Activated B cell treated with CpG ODN at 0.5 μM for 24 hours (primary cell): ENCODE measurements at regions of chr1 and their contacts with region 1.

Region 1: GRCh38 chr1:19704247-19705113 is 39.8 kb downstream of the HTR6 start:
- DNase-seq: peak; percentile 34
- ATAC-seq: peak; percentile 61
- H3K4me3 Mint-ChIP-seq: no peak overlapping the region
- H3K27ac Mint-ChIP-seq: no peak overlapping the region
- H3K4me1 Mint-ChIP-seq: peaks cover 2% of the 10 kb centered on the region
- H3K27me3 Mint-ChIP-seq: no peaks in the 10 kb centered on the region
- CTCF ChIP-seq: no peak

Region 2: DNA sequence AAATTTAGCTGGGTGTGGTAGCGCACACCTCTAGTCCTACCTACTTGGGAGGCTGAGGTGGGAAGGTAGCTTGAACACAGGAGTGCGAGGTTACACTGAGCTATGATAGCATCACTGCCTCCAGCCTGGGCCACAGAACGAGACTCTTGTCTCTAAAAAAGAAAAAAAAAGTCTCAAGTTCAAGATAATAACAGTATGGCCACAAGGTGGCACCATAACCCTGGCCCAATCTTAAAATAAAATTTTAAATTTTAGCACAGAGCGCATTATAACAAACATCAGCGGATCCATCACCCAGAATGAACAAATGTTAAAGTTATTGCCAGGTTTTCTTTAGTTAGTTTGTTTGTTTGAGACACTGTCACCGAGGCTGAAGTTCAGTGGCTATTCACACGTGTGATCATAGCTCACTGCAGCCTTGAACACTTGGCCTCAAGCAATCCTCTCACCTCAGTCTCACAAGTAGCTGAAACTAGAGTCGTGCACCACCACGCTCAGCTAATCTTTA is 42.7 kb before region 1 on chr1:
- CTCF ChIA-PET with region 1: interaction called, 49 read pairs
- POLR2A ChIA-PET with region 1: no interaction called
- intact Hi-C with region 1: loop called (anchors 1 kb)
- DNase-seq: no peak
- ATAC-seq: no peak
- H3K4me3 Mint-ChIP-seq: no peak overlapping the region
- H3K27ac Mint-ChIP-seq: no peak overlapping the region
- H3K4me1 Mint-ChIP-seq: peaks cover 25% of the 10 kb centered on the region
- H3K27me3 Mint-ChIP-seq: peaks cover 37% of the 10 kb centered on the region
- CTCF ChIP-seq: peak; percentile 97

Region 3: DNA sequence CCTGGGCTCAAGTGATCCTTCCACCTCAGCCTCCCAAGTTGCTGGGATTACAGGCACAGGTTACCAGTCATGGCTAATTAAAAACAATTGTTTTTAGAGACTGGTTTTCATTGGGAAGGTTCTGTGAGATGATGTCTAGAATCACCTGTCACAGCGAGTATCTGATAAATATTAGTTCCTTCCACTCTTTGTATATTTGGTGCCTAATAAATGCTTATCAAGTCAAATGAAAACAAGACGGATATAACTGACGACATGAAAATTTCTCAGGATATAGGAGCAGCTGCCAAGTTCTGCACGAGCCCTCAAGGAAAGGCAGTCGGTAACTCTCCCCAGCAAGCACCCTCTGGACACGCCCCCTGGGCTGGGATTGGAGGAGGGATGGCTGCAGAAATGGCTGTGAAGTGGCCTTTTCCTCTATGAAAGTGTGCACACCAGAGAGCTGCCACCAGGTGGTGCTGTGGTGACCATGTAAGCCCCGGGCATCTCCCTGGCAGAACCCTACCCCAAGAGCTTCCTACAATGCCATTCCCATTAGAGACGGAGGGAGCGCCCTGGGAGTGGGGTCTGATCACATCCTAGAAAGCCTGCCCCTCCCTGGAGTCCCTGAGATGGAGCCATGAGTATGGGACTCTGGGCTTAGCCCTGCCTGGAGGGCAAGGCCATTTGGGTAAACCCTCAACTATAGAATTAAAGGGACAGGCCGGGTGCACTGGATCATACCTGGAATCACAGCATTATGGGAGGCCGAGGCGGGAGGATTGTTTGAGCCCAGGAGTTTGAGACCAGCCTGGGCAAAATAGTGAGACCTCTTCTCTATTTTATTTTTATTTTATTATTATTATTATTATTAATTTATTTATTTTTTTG is 11.1 kb after region 1 on chr1:
- CTCF ChIA-PET with region 1: interaction called, 10 read pairs
- POLR2A ChIA-PET with region 1: no interaction called
- intact Hi-C with region 1: no loop called
- DNase-seq: peak; percentile 62
- ATAC-seq: peak; percentile 98
- H3K4me3 Mint-ChIP-seq: no peak overlapping the region
- H3K27ac Mint-ChIP-seq: no peak overlapping the region
- H3K4me1 Mint-ChIP-seq: no peaks in the 10 kb centered on the region
- H3K27me3 Mint-ChIP-seq: no peaks in the 10 kb centered on the region
- CTCF ChIP-seq: no peak